ENCODE measurements at regions of chr1 and their contacts with region 1.

Region 1: GRCh38 chr1:226656601-226657277 is 82.3 kb downstream of the ITPKB start:
- DNase-seq: peak; percentile 52 to 62
- ATAC-seq: peak; percentile 60 to 77 (median 70)
- H3K4me3 ChIP-seq: no peak overlapping the region
- H3K27ac ChIP-seq: peak overlapping the region; percentile 77
- H3K4me1 ChIP-seq: peaks cover 70% of the 10 kb centered on the region
- H3K27me3 ChIP-seq: no peaks in the 10 kb centered on the region
- CTCF ChIP-seq: no peak

Region 2: DNA sequence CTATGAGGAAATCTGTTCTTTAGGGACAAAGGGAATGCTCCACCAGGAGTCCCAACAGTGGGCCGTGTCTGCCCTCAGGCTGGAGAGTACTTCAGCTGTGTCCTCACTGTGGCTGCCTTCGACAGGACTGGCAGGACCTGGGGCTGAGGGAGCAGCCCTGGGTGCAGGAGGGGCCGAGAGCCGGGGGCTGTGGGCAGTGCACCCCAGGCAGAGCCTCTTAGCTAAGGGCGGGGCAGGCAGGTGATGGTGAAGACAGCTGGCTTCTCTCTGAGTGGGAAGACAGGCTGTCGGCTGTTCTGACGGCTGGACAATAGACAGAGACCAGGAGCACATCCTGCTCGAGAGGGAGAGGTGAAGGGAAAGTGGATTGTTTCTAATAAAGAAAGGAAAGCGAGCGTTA is 16.4 kb before region 1 on chr1:
- intact Hi-C with region 1: loop called in 1 of 2 experiments (anchors 1 kb)
- DNase-seq: peak; percentile 4 to 34
- ATAC-seq: no peak
- H3K4me3 ChIP-seq: no peak overlapping the region
- H3K27ac ChIP-seq: no peak overlapping the region
- H3K4me1 ChIP-seq: peaks cover 19% of the 10 kb centered on the region
- H3K27me3 ChIP-seq: no peaks in the 10 kb centered on the region
- CTCF ChIP-seq: no peak